ENCODE measurements at regions of chr12 and their contacts with region 1.

Region 1: DNA sequence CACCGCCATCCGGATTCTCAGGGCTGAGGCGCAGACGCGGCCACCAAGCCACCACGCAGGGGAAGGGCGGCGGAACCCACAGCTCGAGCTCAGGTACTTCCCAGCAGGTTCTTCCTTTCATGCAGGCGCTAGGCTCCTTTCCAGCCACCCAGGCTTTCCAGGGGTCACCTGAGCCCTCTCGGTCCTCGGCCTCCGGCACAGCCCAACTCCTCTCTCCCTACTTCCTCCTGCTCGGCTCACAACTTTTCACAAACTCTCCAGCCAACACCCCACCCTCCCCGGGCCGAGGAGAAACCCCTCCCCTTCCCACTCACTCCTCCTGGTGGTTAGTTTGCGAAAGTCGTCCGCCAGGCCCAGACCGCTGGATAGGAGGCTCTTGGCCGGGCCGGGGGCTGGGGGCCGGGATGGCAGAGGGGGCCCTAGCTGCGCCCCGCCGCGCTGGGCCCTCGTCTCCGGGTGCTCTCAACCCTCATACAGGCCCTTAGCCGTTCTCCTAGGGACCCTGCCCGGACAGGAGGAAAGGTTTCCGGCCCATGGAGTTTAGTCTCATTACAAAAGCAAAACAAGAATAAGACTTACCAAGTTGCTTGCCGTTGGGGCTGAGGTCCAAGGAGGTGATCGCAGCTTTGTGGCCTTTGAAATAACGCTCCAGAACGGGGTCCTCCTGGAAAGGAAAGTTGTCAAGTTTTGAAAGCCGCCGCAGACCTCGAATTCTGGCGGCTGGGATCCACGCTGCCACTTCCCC is at the start of gene GALNT4:
- DNase-seq: peak; percentile 85 to 97
- H3K4me3 ChIP-seq: peak within 1 kb of the TSS; percentile 97
- CTCF ChIP-seq: peak in 1 of 3 donors; percentile 51
- POLR2A ChIP-seq: no peak
- total RNA-seq, gene GALNT4: 1.4 to 5.5 (median 2.4) TPM

Region 2: GRCh38 chr12:89019408-89020120 is 505.1 kb before region 1 on chr12:
- intact Hi-C with region 1: loop called (anchors 10 kb)
- DNase-seq: peak; percentile 80 to 93
- H3K4me3 ChIP-seq: no peak overlapping the region
- CTCF ChIP-seq: no peak
- POLR2A ChIP-seq: no peak

Region 3: DNA sequence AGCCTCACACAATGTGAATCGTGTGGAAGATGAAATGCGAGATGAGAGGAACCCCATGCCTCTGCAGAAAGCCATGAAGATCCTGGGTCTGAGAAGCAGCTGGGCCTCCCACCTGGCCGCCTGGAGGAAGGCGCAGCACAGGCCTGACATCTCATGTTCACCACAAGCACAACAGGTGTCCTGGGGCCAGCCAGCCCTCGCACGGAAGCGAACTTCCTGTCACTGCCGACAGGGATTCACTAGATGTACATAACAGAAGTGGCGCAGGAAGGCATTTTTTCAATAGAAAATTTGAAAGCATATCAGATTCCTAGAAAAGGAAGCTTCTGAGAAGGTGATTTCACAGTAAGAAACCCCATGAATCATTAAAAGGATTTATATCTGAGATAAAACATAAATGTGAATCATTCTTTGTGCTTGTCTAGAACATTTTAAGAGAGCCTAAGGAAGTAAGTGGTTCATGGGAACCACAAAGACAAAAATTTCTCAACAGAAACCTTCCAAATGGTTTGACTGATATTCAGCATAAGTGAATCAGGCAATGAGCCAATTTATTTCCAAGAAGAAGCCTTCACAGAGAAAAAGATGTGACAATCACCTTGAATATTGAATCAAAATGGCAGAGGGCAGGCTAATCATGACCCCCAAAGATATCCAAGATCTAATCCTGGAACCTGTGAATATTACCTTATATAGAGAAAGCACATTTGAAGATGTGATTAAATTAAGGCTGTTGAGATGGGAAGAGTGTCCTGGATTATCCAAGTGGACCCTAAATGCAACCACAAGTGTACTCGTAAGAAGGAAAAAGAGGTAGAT is 484.4 kb before region 1 on chr12:
- intact Hi-C with region 1: loop called (anchors 10 kb)
- DNase-seq: no peak
- H3K4me3 ChIP-seq: no peak overlapping the region
- CTCF ChIP-seq: no peak
- POLR2A ChIP-seq: no peak

Region 4: GRCh38 chr12:89593873-89594272 is 69.2 kb after region 1 on chr12:
- intact Hi-C with region 1: no loop called
- DNase-seq: no peak
- H3K4me3 ChIP-seq: no peak overlapping the region
- CTCF ChIP-seq: no peak
- POLR2A ChIP-seq: no peak